ENCODE measurements at regions of chr6 and their contacts with region 1.

Region 1: GRCh38 chr6:31901953-31902643 is at the start of gene ZBTB12:
- DNase-seq: no peak
- H3K4me3 ChIP-seq: peak within 1 kb of the TSS; percentile 51 to 82 (median 70)
- H3K27ac ChIP-seq: peak within 1 kb of the TSS; percentile 77 to 92 (median 88)
- H3K4me1 ChIP-seq: peaks cover 21 to 55% (median 21%) of the 10 kb centered on the region in 3 donors
- H3K27me3 ChIP-seq: no peaks in the 10 kb centered on the region
- CTCF ChIP-seq: peak in 1 of 6 experiments; percentile 16
- POLR2A ChIP-seq: peak in 2 of 4 donors; percentile 28 to 61
- total RNA-seq, gene ZBTB12: 0.83 to 2.8 (median 1.0) TPM

Region 2: GRCh38 chr6:31952140-31952805 is 50.2 kb after region 1 on chr6:
- intact Hi-C with region 1: loop called (anchors 5 kb)
- DNase-seq: no peak
- H3K4me3 ChIP-seq: no peak overlapping the region
- H3K27ac ChIP-seq: peak overlapping the region in 2 of 4 donors; percentile 2 to 50
- H3K4me1 ChIP-seq: peaks cover 0 to 2% (median 0%) of the 10 kb centered on the region in 3 donors
- H3K27me3 ChIP-seq: no peaks in the 10 kb centered on the region
- CTCF ChIP-seq: peak in 5 of 6 experiments; percentile 56 to 73 (median 61)
- POLR2A ChIP-seq: no peak

Measured in esophagus squamous epithelium (tissue), 5 donors.